Right cardiac atrium (tissue), 5 donors: ENCODE measurements at regions of chr15 and their contacts with region 1.

Region 1: DNA sequence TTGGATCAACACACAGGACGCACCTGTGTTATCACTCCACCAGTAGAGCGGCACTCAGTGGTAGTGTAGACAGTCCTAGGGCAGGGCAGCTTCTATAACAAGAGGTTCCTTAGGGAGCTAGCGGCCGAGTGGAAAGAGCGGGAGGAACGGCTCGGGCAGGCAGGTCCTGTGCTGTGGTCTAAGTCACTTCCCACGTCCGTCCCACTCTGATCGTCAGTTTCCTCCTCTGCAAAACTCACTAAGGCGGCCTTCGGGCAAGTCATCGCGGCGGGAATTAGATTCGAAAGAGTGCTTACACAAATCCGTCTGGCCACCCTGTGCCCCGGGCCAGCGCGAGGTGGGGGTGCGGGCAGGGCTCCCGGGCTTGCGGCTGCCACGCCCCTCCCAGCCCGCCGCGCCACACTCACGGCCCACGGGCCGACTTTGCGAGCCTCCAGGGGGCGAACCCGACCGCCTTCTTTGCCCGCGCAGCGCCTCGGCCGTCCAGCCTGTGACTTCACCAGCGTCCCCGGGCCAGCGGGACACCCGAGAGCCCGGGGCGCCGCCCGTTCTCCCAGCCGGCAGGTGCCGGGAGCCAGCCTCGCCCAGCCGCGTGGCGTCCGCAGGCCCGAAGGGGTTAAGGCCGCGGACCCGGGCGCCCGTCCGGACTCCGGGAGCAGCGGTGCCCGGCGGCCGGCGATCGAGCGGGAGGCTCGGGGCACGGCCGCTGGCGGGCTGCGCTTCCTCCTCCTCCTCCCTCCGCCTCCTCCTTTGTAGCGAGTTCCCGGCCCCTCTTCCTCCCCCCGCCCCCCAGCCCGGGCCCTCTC is 416 bp upstream of the CORO2B start:
- DNase-seq: peak; percentile 87 to 93 (median 93)
- ATAC-seq: peak; percentile 83 to 85
- H3K4me3 ChIP-seq: peak overlapping the region; percentile 93
- H3K27ac ChIP-seq: peak overlapping the region; percentile 76
- H3K4me1 ChIP-seq: peaks cover 5% of the 10 kb centered on the region
- H3K27me3 ChIP-seq: no peaks in the 10 kb centered on the region

Region 2: DNA sequence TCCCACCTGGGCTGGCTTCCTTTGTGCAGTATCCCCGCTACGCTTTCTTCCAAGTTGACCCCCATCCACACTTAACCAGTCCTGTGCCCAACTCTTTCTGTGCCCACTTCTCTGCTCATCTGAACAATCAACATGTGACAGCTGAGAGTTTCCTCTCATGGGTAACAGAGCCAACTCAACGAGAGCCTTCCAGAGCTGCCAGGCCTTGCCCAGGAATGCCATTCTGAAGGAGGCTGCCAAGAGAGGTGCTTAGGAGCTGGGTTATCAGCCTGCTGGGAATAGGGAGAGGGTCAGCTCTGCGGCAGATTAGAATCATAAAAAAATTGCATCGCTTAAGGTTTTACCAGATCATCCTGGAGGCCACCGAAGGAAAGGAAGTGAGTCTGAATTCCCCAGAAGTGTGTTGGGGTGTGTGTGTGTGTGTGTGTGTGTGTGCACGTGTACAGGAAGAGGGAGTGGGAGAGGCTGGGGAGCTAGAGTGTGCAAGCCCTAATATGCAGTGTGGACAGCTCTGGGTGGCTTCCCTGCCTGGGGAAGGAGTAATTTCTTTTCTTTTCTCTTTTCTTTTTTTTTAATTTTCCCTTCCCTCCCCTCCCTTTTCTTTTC is 213.1 kb before region 1 on chr15:
- intact Hi-C with region 1: no loop called
- DNase-seq: peak in 2 of 3 donors; percentile 66 to 75
- ATAC-seq: peak; percentile 64 to 73
- H3K4me3 ChIP-seq: no peak overlapping the region
- H3K27ac ChIP-seq: peak overlapping the region; percentile 66
- H3K4me1 ChIP-seq: peaks cover 36% of the 10 kb centered on the region
- H3K27me3 ChIP-seq: no peaks in the 10 kb centered on the region

Region 3: GRCh38 chr15:68637767-68638404 is 59.5 kb after region 1 on chr15:
- intact Hi-C with region 1: loop called in 2 of 4 experiments (anchors 2 to 5 kb)
- DNase-seq: peak; percentile 84 to 93 (median 92)
- ATAC-seq: peak; percentile 80 to 85
- H3K4me3 ChIP-seq: no peak overlapping the region
- H3K27ac ChIP-seq: no peak overlapping the region
- H3K4me1 ChIP-seq: peaks cover 23% of the 10 kb centered on the region
- H3K27me3 ChIP-seq: no peaks in the 10 kb centered on the region

Region 4: DNA sequence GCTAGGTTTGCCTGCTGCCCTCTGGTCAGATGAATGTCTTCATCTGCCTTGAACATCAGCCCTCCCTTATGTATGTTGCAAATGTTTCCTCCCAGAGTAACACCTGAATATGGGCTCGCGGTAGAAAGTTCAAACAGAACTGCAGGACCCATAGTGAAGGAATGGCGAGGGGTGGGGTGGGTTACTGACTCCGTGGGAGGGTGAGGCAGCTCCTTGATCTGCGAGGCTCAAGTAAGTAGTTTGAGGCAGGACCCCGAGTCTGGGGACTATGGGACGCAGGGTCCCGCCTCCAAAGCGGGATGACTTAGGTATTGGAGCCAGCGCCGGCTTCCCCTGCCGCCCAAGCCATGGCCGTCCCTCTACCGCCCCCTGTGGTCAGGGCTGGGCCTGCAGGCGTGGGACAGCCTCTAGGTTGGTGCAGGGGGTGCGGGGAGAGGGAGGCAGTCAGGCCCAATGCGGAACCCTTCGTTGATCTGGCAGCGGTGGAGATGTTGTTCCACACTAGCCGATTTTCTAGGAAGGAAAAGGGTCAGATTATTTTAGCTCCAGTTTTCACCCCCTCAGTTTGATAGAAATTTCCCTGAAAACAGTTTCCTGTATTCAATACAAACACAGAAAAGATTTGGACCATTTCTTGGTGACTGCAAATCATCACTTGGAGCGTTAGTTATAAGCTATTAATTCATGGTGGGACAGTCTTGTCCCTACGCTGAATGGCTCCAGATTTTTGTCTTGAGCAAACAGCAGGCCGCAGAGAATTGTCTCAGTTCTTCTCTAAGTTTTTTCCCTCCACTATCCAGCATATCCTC is 72.7 kb after region 1 on chr15:
- intact Hi-C with region 1: loop called in 1 of 4 experiments (anchors 10 kb)
- DNase-seq: peak; percentile 73 to 87 (median 86)
- ATAC-seq: peak; percentile 64 to 87
- H3K4me3 ChIP-seq: no peak overlapping the region
- H3K27ac ChIP-seq: no peak overlapping the region
- H3K4me1 ChIP-seq: no peaks in the 10 kb centered on the region
- H3K27me3 ChIP-seq: no peaks in the 10 kb centered on the region

Region 5: GRCh38 chr15:68672781-68673205 is 94.4 kb after region 1 on chr15:
- intact Hi-C with region 1: loop called in 1 of 4 experiments (anchors 5 kb)
- DNase-seq: no peak
- ATAC-seq: no peak
- H3K4me3 ChIP-seq: no peak overlapping the region
- H3K27ac ChIP-seq: no peak overlapping the region
- H3K4me1 ChIP-seq: peaks cover 3% of the 10 kb centered on the region
- H3K27me3 ChIP-seq: no peaks in the 10 kb centered on the region